Activated B cell treated with CpG ODN at 0.5 μM for 24 hours (primary cell): ENCODE measurements at regions of chr5 and their contacts with region 1.

Region 1: GRCh38 chr5:158848634-158849033 is 251.1 kb downstream of the EBF1 start:
- DNase-seq: no peak
- ATAC-seq: peak; percentile 76
- H3K4me3 Mint-ChIP-seq: peak overlapping the region; percentile 25
- H3K27ac Mint-ChIP-seq: peak overlapping the region; percentile 76
- H3K4me1 Mint-ChIP-seq: peaks cover 90% of the 10 kb centered on the region
- H3K27me3 Mint-ChIP-seq: no peaks in the 10 kb centered on the region
- CTCF ChIP-seq: no peak

Region 2: DNA sequence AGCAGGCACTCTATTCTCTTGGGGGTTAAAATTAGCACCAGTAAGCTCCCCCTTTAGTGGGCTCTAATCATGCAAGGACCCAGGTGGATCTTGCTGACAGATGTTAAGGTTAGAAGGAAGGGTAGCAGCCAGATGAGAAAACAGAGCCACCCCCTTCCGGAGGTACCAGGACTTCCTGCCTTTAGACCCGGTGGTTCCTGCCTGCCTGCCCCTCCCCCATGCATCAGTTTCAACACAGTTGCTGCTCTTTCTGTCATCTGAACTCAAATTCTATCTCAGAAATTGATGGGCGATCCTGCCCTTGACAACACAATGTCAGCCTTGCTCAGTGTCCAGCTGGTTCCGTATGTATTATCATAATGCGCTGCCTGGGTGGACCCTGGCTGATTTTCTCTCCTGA is 36.2 kb before region 1 on chr5:
- CTCF ChIA-PET with region 1: no interaction called
- POLR2A ChIA-PET with region 1: interaction called, 3 read pairs
- intact Hi-C with region 1: loop called (anchors 5 kb)
- DNase-seq: peak; percentile 42
- ATAC-seq: peak; percentile 79
- H3K4me3 Mint-ChIP-seq: peak overlapping the region; percentile 55
- H3K27ac Mint-ChIP-seq: peak overlapping the region; percentile 89
- H3K4me1 Mint-ChIP-seq: peaks cover 99% of the 10 kb centered on the region
- H3K27me3 Mint-ChIP-seq: no peaks in the 10 kb centered on the region
- CTCF ChIP-seq: no peak

Region 3: GRCh38 chr5:158819840-158820620 is 28.6 kb before region 1 on chr5:
- CTCF ChIA-PET with region 1: no interaction called
- POLR2A ChIA-PET with region 1: interaction called, 4 read pairs
- intact Hi-C with region 1: loop called (anchors 2 kb)
- DNase-seq: no peak
- ATAC-seq: peak; percentile 76
- H3K4me3 Mint-ChIP-seq: peak overlapping the region; percentile 75
- H3K27ac Mint-ChIP-seq: peak overlapping the region; percentile 95
- H3K4me1 Mint-ChIP-seq: peaks cover 99% of the 10 kb centered on the region
- H3K27me3 Mint-ChIP-seq: no peaks in the 10 kb centered on the region
- CTCF ChIP-seq: no peak

Region 4: GRCh38 chr5:158832096-158832685 is 16.4 kb before region 1 on chr5:
- CTCF ChIA-PET with region 1: interaction called, 5 read pairs
- POLR2A ChIA-PET with region 1: interaction called, 3 read pairs
- intact Hi-C with region 1: loop called (anchors 2 kb)
- DNase-seq: no peak
- ATAC-seq: no peak
- H3K4me3 Mint-ChIP-seq: no peak overlapping the region
- H3K27ac Mint-ChIP-seq: no peak overlapping the region
- H3K4me1 Mint-ChIP-seq: peaks cover 62% of the 10 kb centered on the region
- H3K27me3 Mint-ChIP-seq: no peaks in the 10 kb centered on the region
- CTCF ChIP-seq: no peak

Region 5: DNA sequence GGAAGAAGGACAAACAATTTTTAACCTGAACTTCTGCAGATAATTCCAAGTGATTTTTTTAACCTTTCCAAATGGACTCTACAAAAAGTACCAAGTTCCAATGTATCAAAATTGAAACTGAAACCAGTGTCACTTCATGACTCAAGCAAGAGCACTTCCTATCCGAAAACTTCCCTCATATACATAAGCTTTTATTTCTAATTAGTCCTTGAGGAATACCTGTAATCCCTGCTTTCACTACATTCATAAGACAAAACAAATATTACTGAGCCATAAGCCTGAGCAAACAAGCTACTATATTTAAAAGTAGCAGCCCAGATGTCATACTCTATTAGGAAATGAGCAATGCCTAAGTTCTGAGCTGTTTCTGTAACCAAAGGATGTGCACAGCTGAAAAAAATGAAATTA is 26.6 kb after region 1 on chr5:
- CTCF ChIA-PET with region 1: interaction called, 4 read pairs
- POLR2A ChIA-PET with region 1: interaction called, 3 read pairs
- intact Hi-C with region 1: loop called (anchors 2 kb)
- DNase-seq: no peak
- ATAC-seq: peak; percentile 36
- H3K4me3 Mint-ChIP-seq: peak overlapping the region; percentile 72
- H3K27ac Mint-ChIP-seq: peak overlapping the region; percentile 93
- H3K4me1 Mint-ChIP-seq: peaks cover 93% of the 10 kb centered on the region
- H3K27me3 Mint-ChIP-seq: no peaks in the 10 kb centered on the region
- CTCF ChIP-seq: no peak

Region 6: GRCh38 chr5:160064995-160065630 is 1216.5 kb after region 1 on chr5:
- CTCF ChIA-PET with region 1: no interaction called
- POLR2A ChIA-PET with region 1: no interaction called
- intact Hi-C with region 1: no loop called
- DNase-seq: no peak
- ATAC-seq: no peak
- H3K4me3 Mint-ChIP-seq: no peak overlapping the region
- H3K27ac Mint-ChIP-seq: no peak overlapping the region
- H3K4me1 Mint-ChIP-seq: no peaks in the 10 kb centered on the region
- H3K27me3 Mint-ChIP-seq: no peaks in the 10 kb centered on the region
- CTCF ChIP-seq: no peak